GM10248 (cell line): ENCODE measurements at regions of chr15 and their contacts with region 1.

Region 1: DNA sequence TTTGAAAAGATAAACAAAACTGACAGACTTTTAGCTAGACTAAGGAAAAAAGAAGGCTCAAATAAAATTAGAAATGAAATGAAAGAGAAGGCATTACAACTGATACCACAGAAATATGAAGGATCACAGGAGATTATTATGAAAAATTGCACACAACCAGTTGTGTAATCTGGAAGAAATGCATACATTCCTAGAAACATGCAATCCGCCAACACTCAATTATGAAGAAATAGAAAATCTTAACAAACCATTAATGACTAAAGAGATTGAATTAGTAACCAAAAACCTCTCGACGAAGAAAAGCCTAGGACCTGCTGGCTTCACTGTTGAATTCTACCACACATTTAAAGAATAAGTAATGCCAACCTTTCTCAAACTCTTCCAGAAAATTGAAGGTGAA is 149.5 kb downstream of the SV2B start:
- DNase-seq: no peak
- CTCF ChIP-seq: no peak

Region 2: GRCh38 chr15:91049378-91050127 is 200.0 kb before region 1 on chr15:
- CTCF ChIA-PET with region 1: interaction called, 30 read pairs
- POLR2A ChIA-PET with region 1: no interaction called
- DNase-seq: peak; percentile 54
- CTCF ChIP-seq: peak; percentile 76

Region 3: GRCh38 chr15:91238644-91239425 is 10.8 kb before region 1 on chr15:
- CTCF ChIA-PET with region 1: interaction called, 22 read pairs
- POLR2A ChIA-PET with region 1: no interaction called
- DNase-seq: no peak
- CTCF ChIP-seq: no peak

Region 4: DNA sequence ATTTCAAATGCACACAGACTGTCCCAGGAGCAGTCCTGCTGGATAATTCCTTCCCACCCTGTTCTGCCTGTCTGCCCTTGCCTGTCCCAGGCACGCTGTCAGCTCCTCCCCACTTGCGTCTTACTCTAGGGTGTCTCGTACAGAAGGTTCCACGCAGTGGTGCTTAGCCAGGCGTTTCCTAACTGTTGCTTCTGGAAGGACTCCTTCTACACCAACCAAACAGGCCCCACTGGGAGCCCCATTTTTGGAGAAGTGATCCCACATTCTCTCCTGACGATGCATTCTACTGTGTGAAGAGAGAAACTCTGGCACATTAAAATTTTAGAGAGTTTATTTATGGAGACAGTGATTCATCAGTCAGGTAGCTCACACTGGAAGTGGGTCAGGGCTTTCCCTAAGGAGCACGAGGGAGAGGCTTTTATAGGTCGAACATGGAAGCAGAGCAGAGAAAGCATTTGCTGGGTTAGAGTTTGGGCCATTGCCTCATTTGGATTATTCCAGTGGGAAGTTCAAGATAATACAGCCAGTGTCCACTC is 14.5 kb after region 1 on chr15:
- CTCF ChIA-PET with region 1: interaction called, 32 read pairs
- POLR2A ChIA-PET with region 1: no interaction called
- DNase-seq: no peak
- CTCF ChIP-seq: no peak